A673 (cell line): ENCODE measurements at regions of chr15 and their contacts with region 1.

Region 1: DNA sequence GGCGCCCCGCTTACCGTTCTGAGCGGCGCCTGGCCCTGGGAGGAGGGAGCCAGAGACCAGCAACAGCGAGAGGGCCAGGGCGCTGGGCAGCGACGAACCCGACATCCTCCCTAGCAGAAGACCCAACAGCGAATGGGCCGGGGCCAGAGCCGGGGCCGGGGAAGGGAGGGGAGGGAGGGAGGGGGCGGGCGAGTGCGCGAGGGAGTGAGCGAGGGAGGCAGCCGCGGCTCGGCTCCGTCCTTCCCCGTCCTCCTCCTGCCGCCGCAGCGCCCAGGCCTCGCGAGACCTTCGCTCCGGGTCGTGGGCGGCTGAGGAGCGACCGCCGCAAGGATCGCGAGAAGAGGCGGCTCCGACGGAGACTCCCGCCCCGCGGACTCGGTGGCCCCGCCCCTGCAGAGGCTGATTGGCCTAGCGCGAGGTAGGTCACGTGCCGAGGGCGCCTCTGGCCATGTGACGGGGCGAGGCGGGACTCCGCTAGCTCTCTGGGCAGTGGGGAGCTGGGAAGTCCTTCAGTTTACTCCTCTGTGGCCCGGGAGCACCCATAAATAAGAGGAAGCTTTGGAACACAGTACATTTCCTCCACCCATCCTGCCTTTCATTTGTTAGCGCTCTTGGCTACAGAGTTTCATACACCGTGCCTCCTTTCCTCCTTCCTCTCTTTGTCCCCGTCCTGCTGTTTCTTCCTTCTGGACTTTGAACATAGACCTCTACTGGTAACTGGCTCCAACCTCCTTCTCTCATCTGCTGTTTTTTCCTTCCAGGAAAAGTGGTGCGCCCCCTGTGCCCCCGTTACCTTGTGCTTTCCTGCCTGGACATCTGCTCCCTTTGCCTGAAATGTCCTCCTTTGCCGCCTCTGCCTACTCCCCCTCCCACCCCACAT is at the start of gene NPTN:
- DNase-seq: peak; percentile 98
- H3K4me3 ChIP-seq: peak within 1 kb of the TSS; percentile 75
- H3K27ac ChIP-seq: peak within 1 kb of the TSS; percentile 82
- H3K4me1 ChIP-seq: peaks cover 41% of the 10 kb centered on the region
- H3K27me3 ChIP-seq: no peaks in the 10 kb centered on the region
- CTCF ChIP-seq: no peak
- total RNA-seq, gene NPTN: 96.1 and 101 TPM in 2 replicates

Region 2: DNA sequence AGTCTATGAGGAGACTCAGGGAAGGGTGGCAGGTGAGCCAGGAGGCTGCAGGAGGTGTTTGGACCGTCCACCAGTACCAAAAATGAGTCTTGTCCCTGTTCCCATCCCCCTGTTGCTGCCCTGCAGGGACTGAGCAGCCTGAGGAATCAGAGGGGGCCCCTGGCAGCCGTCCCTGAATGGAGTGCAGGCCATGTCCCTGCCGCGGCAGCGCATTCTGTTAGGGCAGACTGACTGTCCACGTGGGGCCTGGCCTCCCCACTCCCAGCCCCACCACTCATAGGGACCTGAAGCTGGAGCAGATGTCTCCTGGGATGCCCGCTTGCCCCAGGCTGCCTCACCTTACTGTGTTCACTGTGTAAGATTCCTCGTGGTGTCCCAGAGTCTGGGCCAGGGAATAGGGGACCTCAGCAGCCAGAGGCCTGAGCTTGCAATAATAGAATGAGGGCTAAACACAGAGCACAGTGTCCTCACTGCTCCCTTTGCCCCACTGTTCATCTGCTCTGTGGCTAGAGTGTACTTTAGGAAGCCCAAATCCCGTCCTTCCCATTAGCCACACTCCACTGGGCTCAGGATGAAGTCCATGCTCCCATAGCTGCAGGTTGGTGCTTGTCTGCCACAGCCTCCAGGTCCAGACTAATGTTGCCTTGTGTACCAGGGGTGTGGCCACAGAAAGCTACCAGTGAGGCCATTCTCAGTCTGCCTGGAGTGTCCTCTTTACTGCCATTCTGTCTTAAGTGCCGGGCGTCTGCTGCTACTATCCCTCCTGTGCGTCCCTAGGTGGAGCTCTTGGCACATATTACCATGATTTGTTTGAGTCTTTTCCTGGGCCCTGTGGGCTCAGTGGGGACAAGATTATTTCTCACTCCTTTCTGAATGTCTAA is 327.8 kb before region 1 on chr15:
- CTCF ChIA-PET with region 1: no interaction called
- POLR2A ChIA-PET with region 1: no interaction called
- intact Hi-C with region 1: loop called (anchors 5 kb)
- DNase-seq: peak; percentile 71
- H3K4me3 ChIP-seq: no peak overlapping the region
- H3K27ac ChIP-seq: no peak overlapping the region
- H3K4me1 ChIP-seq: no peaks in the 10 kb centered on the region
- H3K27me3 ChIP-seq: no peaks in the 10 kb centered on the region
- CTCF ChIP-seq: peak; percentile 72

Region 3: GRCh38 chr15:73560501-73561117 is 72.7 kb before region 1 on chr15:
- CTCF ChIA-PET with region 1: interaction called, 55 read pairs
- POLR2A ChIA-PET with region 1: no interaction called
- intact Hi-C with region 1: loop called (anchors 1 kb)
- DNase-seq: peak; percentile 83
- H3K4me3 ChIP-seq: no peak overlapping the region
- H3K27ac ChIP-seq: no peak overlapping the region
- H3K4me1 ChIP-seq: peaks cover 8% of the 10 kb centered on the region
- H3K27me3 ChIP-seq: no peaks in the 10 kb centered on the region
- CTCF ChIP-seq: peak; percentile 61

Region 4: GRCh38 chr15:73660455-73660854 is 27.1 kb after region 1 on chr15:
- CTCF ChIA-PET with region 1: no interaction called
- POLR2A ChIA-PET with region 1: no interaction called
- intact Hi-C with region 1: no loop called
- DNase-seq: no peak
- H3K4me3 ChIP-seq: no peak overlapping the region
- H3K27ac ChIP-seq: no peak overlapping the region
- H3K4me1 ChIP-seq: no peaks in the 10 kb centered on the region
- H3K27me3 ChIP-seq: no peaks in the 10 kb centered on the region
- CTCF ChIP-seq: no peak

Region 5: GRCh38 chr15:73704869-73705645 is 71.7 kb after region 1 on chr15:
- CTCF ChIA-PET with region 1: interaction called, 38 read pairs
- POLR2A ChIA-PET with region 1: no interaction called
- intact Hi-C with region 1: loop called (anchors 1 kb)
- DNase-seq: peak; percentile 68
- H3K4me3 ChIP-seq: no peak overlapping the region
- H3K27ac ChIP-seq: no peak overlapping the region
- H3K4me1 ChIP-seq: no peaks in the 10 kb centered on the region
- H3K27me3 ChIP-seq: no peaks in the 10 kb centered on the region
- CTCF ChIP-seq: peak; percentile 91